GM23248 (cell line): ENCODE measurements at regions of chr14 and their contacts with region 1.

Region 1: DNA sequence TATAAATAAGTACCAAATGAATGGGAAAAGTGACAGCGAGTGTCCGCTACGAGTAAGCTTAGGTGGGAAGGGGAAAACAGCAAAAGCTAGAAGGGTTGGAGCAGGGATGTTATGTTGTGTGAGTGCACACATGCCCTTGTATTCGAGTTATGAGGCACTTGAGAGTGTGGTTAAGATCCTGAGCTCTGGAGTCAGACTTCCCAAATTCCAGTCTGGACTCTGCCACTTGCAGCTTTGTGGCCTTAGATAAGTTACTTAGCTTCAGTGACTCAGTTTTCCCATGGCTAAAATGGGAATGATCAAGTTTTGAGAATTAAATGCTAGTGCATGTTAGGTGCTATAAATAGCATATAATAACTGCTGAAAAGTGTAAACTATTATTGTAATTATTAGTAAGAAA is 44.9 kb downstream of the KTN1 start:
- DNase-seq: peak; percentile 26
- H3K4me3 ChIP-seq: no peak overlapping the region
- H3K27ac ChIP-seq: no peak overlapping the region
- H3K4me1 ChIP-seq: peaks cover 4% of the 10 kb centered on the region; the same call in 1 of the 2 replicates
- H3K27me3 ChIP-seq: no peaks in the 10 kb centered on the region

Region 2: GRCh38 chr14:55446218-55446654 is 178.7 kb before region 1 on chr14:
- in situ Hi-C with region 1: loop called (anchors 25 kb)
- DNase-seq: peak; percentile 93
- H3K4me3 ChIP-seq: peak overlapping the region; percentile 19
- H3K27ac ChIP-seq: peak overlapping the region; percentile 72
- H3K4me1 ChIP-seq: peaks cover 31% of the 10 kb centered on the region
- H3K27me3 ChIP-seq: no peaks in the 10 kb centered on the region

Region 3: DNA sequence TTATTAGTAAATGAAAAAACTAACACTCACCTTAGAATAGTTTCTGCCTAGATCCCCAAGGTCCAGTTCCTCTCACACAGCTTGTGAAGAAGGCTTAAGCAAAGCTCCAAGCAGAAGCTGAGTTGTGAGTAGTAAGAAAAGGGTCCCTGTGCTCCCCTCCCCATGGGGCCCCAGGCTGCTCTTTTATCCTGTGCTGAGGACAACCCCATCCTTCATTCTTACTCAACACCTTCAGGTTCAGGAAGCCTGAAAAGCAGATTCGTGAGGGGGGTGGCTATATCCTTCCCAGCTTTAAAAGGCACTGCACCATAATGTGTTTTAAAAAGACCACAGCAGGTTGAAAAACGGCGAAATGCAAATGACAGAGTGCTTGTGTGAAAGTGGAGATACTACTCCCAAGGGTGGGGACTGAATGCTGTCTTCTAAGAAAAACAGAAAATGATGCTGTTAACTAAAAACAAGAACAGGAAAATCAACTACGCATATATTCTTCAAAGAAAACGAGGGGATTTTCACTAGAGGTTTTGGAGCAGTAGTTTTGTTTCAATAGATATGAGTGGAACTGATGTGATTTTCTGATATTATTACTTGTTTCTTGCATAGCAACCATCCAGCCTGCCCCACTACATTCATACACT is 137.8 kb after region 1 on chr14:
- in situ Hi-C with region 1: no loop called
- DNase-seq: no peak
- H3K4me3 ChIP-seq: no peak overlapping the region
- H3K27ac ChIP-seq: no peak overlapping the region
- H3K4me1 ChIP-seq: no peaks in the 10 kb centered on the region
- H3K27me3 ChIP-seq: no peaks in the 10 kb centered on the region; the same call in 1 of the 2 replicates

Region 4: GRCh38 chr14:55832122-55832911 is 207.4 kb after region 1 on chr14:
- in situ Hi-C with region 1: no loop called
- DNase-seq: peak; percentile 19
- H3K4me3 ChIP-seq: no peak overlapping the region
- H3K27ac ChIP-seq: no peak overlapping the region
- H3K4me1 ChIP-seq: no peaks in the 10 kb centered on the region; the same call in 1 of the 2 replicates
- H3K27me3 ChIP-seq: no peaks in the 10 kb centered on the region; the same call in 1 of the 2 replicates

Region 5: GRCh38 chr14:56073799-56074198 is 448.9 kb after region 1 on chr14:
- in situ Hi-C with region 1: no loop called
- DNase-seq: no peak
- H3K4me3 ChIP-seq: no peak overlapping the region
- H3K27ac ChIP-seq: no peak overlapping the region
- H3K4me1 ChIP-seq: no peaks in the 10 kb centered on the region
- H3K27me3 ChIP-seq: peaks cover 16% of the 10 kb centered on the region; the same call in 1 of the 2 replicates